ENCODE measurements at regions of chr7 and their contacts with region 1.

Region 1: GRCh38 chr7:16822029-16822428 is 17.2 kb upstream of the AGR2 start:
- DNase-seq: no peak
- H3K4me3 ChIP-seq: no peak overlapping the region
- H3K4me3 Mint-ChIP-seq: no peak overlapping the region
- H3K27ac Mint-ChIP-seq: peak overlapping the region; percentile 71
- H3K4me1 ChIP-seq: peaks cover 17% of the 10 kb centered on the region
- H3K4me1 Mint-ChIP-seq: peaks cover 26% of the 10 kb centered on the region
- H3K27me3 ChIP-seq: no peaks in the 10 kb centered on the region
- H3K27me3 Mint-ChIP-seq: no peaks in the 10 kb centered on the region
- CTCF ChIP-seq: no peak

Region 2: GRCh38 chr7:16839646-16840045 is 17.6 kb after region 1 on chr7:
- CTCF ChIA-PET with region 1: no interaction called
- POLR2A ChIA-PET with region 1: no interaction called
- intact Hi-C with region 1: loop called (anchors 2 kb)
- DNase-seq: no peak
- H3K4me3 ChIP-seq: no peak overlapping the region
- H3K4me3 Mint-ChIP-seq: no peak overlapping the region
- H3K27ac Mint-ChIP-seq: no peak overlapping the region
- H3K4me1 ChIP-seq: peaks cover 4% of the 10 kb centered on the region; the same call in 1 of the 2 replicates
- H3K4me1 Mint-ChIP-seq: peaks cover 17% of the 10 kb centered on the region
- H3K27me3 ChIP-seq: no peaks in the 10 kb centered on the region
- H3K27me3 Mint-ChIP-seq: no peaks in the 10 kb centered on the region
- CTCF ChIP-seq: no peak